ENCODE measurements at regions of chr1 and their contacts with region 1.

Region 1: GRCh38 chr1:40315239-40315794 is 1.8 kb downstream of the COL9A2 start:
- DNase-seq: peak; percentile 77
- H3K4me3 Mint-ChIP-seq: peak overlapping the region; percentile 78
- H3K27ac Mint-ChIP-seq: peak overlapping the region; percentile 23
- H3K4me1 Mint-ChIP-seq: peaks cover 49% of the 10 kb centered on the region
- H3K27me3 Mint-ChIP-seq: peaks cover 13% of the 10 kb centered on the region

Region 2: GRCh38 chr1:40049725-40050124 is 265.6 kb before region 1 on chr1:
- intact Hi-C with region 1: no loop called
- DNase-seq: no peak
- H3K4me3 Mint-ChIP-seq: peak overlapping the region; percentile 32
- H3K27ac Mint-ChIP-seq: peak overlapping the region; percentile 76
- H3K4me1 Mint-ChIP-seq: peaks cover 80% of the 10 kb centered on the region
- H3K27me3 Mint-ChIP-seq: no peaks in the 10 kb centered on the region

Region 3: DNA sequence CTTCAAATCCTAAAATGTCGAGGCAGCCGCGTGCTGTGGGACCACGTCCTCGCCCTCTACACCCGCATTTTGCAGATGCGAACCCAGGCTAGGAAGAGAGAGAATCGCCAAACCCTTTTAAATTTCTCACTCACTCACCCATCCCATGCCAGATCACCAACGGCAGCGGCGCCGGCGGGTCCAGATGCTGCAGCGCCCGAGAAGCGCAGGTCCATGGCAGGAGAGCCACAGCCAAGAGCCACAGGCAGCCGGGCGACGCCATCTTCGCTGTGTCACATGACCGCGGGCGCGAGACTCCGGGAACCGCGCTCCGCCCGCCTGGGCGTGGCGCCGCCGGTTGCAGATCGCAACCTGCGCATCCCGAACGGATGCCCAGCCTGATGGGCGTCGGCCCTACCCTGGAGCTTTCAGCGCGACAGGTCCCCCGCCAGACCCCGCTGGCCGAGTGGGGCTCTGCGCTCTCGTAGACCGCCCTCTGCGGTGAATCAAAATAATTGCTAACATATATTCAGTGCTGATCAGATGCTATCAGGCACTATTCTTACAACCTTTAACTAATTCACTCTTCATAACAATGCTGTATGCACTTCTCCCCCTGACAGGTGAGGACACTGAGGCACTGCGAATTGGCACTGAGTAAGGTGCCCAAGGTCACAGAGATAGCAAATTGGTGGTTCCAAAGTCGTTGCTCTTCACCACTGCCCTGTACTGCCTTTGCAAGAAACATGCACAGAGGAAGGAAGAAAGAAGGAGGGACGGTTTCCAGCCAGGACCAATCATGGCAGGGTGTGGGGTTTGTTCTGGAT is 218.1 kb before region 1 on chr1 and contains the start of gene PPT1:
- intact Hi-C with region 1: loop called (anchors 5 kb)
- DNase-seq: peak; percentile 79
- H3K4me3 Mint-ChIP-seq: peak within 1 kb of the TSS; percentile 97
- H3K27ac Mint-ChIP-seq: peak within 1 kb of the TSS; percentile 96
- H3K4me1 Mint-ChIP-seq: peaks cover 42% of the 10 kb centered on the region
- H3K27me3 Mint-ChIP-seq: peaks cover 10% of the 10 kb centered on the region
- total RNA-seq, gene PPT1: 101 and 110 TPM in 2 replicates

Region 4: GRCh38 chr1:40153073-40153770 is 162.1 kb before region 1 on chr1:
- intact Hi-C with region 1: loop called (anchors 1 kb)
- DNase-seq: peak; percentile 21
- H3K4me3 Mint-ChIP-seq: no peak overlapping the region
- H3K27ac Mint-ChIP-seq: peak overlapping the region; percentile 21
- H3K4me1 Mint-ChIP-seq: peaks cover 13% of the 10 kb centered on the region
- H3K27me3 Mint-ChIP-seq: peaks cover 12% of the 10 kb centered on the region

Region 5: DNA sequence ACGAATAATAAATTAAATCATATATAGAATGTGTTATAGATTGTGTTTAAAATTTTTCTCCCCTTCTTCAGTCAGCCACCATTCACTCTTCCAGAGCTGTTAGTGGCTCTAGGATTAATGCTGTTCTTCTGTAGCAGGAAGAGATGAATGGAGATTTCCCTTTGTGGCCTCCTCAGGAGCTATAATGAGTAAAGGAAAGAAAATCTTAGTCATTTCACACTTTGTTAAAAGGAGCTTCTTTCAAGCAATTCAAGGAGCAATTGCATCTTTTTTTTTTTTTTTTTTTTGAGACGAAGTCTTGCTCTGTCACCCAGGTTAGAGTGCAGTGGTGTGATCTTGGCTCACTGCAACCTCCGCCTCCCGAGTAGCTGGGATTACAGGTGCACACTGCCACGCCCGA is 91.3 kb before region 1 on chr1:
- intact Hi-C with region 1: loop called (anchors 5 kb)
- DNase-seq: no peak
- H3K4me3 Mint-ChIP-seq: no peak overlapping the region
- H3K27ac Mint-ChIP-seq: peak overlapping the region; percentile 43
- H3K4me1 Mint-ChIP-seq: peaks cover 26% of the 10 kb centered on the region
- H3K27me3 Mint-ChIP-seq: no peaks in the 10 kb centered on the region

Region 6: GRCh38 chr1:40264354-40264781 is 50.9 kb before region 1 on chr1:
- intact Hi-C with region 1: loop called (anchors 2 kb)
- DNase-seq: no peak
- H3K4me3 Mint-ChIP-seq: peak overlapping the region; percentile 58
- H3K27ac Mint-ChIP-seq: peak overlapping the region; percentile 88
- H3K4me1 Mint-ChIP-seq: peaks cover 53% of the 10 kb centered on the region
- H3K27me3 Mint-ChIP-seq: no peaks in the 10 kb centered on the region

Region 7: GRCh38 chr1:40338745-40339424 is 23.6 kb after region 1 on chr1:
- intact Hi-C with region 1: loop called (anchors 1 kb)
- DNase-seq: peak; percentile 84
- H3K4me3 Mint-ChIP-seq: peak overlapping the region; percentile 38
- H3K27ac Mint-ChIP-seq: peak overlapping the region; percentile 75
- H3K4me1 Mint-ChIP-seq: peaks cover 53% of the 10 kb centered on the region
- H3K27me3 Mint-ChIP-seq: no peaks in the 10 kb centered on the region

Region 8: GRCh38 chr1:40385437-40386358 is 70.4 kb after region 1 on chr1:
- intact Hi-C with region 1: loop called (anchors 2 kb)
- DNase-seq: peak; percentile 73
- H3K4me3 Mint-ChIP-seq: peak overlapping the region; percentile 82
- H3K27ac Mint-ChIP-seq: peak overlapping the region; percentile 99
- H3K4me1 Mint-ChIP-seq: peaks cover 89% of the 10 kb centered on the region
- H3K27me3 Mint-ChIP-seq: no peaks in the 10 kb centered on the region

Region 9: GRCh38 chr1:40478276-40478675 is 163.0 kb after region 1 on chr1:
- intact Hi-C with region 1: no loop called
- DNase-seq: no peak
- H3K4me3 Mint-ChIP-seq: peak overlapping the region; percentile 85
- H3K27ac Mint-ChIP-seq: peak overlapping the region; percentile 71
- H3K4me1 Mint-ChIP-seq: peaks cover 20% of the 10 kb centered on the region
- H3K27me3 Mint-ChIP-seq: peaks cover 2% of the 10 kb centered on the region